CD8-positive, alpha-beta T cell (primary cell): ENCODE measurements at regions of chr12 and their contacts with region 1.

Region 1: GRCh38 chr12:11648831-11649702 is at the start of gene ETV6:
- DNase-seq: peak; percentile 22 to 88 (median 64)
- ATAC-seq: peak; percentile 50
- H3K4me3 ChIP-seq: peak within 1 kb of the TSS; percentile 92 to 98
- H3K4me3 Mint-ChIP-seq: peak within 1 kb of the TSS; percentile 96
- H3K27ac ChIP-seq: peak within 1 kb of the TSS; percentile 75 to 76
- H3K27ac Mint-ChIP-seq: peak within 1 kb of the TSS; percentile 94
- H3K4me1 ChIP-seq: peaks cover 31% of the 10 kb centered on the region
- H3K4me1 Mint-ChIP-seq: peaks cover 38% of the 10 kb centered on the region
- H3K27me3 ChIP-seq: no peaks in the 10 kb centered on the region
- H3K27me3 Mint-ChIP-seq: no peaks in the 10 kb centered on the region
- CTCF ChIP-seq: no peak
- total RNA-seq, gene ETV6: 11.3 to 13.9 TPM

Region 2: GRCh38 chr12:9883175-9883574 is 1765.9 kb before region 1 on chr12:
- CTCF ChIA-PET with region 1: no interaction called
- POLR2A ChIA-PET with region 1: no interaction called
- intact Hi-C with region 1: no loop called
- DNase-seq: no peak
- ATAC-seq: no peak
- H3K4me3 ChIP-seq: no peak overlapping the region
- H3K4me3 Mint-ChIP-seq: no peak overlapping the region
- H3K27ac ChIP-seq: no peak overlapping the region
- H3K27ac Mint-ChIP-seq: no peak overlapping the region
- H3K4me1 ChIP-seq: no peaks in the 10 kb centered on the region
- H3K4me1 Mint-ChIP-seq: peaks cover 11% of the 10 kb centered on the region
- H3K27me3 ChIP-seq: no peaks in the 10 kb centered on the region
- H3K27me3 Mint-ChIP-seq: no peaks in the 10 kb centered on the region
- CTCF ChIP-seq: no peak

Region 3: GRCh38 chr12:10726940-10727339 is 922.1 kb before region 1 on chr12:
- CTCF ChIA-PET with region 1: no interaction called
- POLR2A ChIA-PET with region 1: no interaction called
- intact Hi-C with region 1: loop called in 1 of 2 experiments (anchors 5 kb)
- DNase-seq: no peak
- ATAC-seq: no peak
- H3K4me3 ChIP-seq: no peak overlapping the region
- H3K4me3 Mint-ChIP-seq: no peak overlapping the region
- H3K27ac ChIP-seq: no peak overlapping the region
- H3K27ac Mint-ChIP-seq: no peak overlapping the region
- H3K4me1 ChIP-seq: peaks cover 8% of the 10 kb centered on the region
- H3K4me1 Mint-ChIP-seq: peaks cover 15% of the 10 kb centered on the region
- H3K27me3 ChIP-seq: peaks cover 0 to 8% of the 10 kb centered on the region in 2 experiments
- H3K27me3 Mint-ChIP-seq: peaks cover 31% of the 10 kb centered on the region
- CTCF ChIP-seq: no peak

Region 4: DNA sequence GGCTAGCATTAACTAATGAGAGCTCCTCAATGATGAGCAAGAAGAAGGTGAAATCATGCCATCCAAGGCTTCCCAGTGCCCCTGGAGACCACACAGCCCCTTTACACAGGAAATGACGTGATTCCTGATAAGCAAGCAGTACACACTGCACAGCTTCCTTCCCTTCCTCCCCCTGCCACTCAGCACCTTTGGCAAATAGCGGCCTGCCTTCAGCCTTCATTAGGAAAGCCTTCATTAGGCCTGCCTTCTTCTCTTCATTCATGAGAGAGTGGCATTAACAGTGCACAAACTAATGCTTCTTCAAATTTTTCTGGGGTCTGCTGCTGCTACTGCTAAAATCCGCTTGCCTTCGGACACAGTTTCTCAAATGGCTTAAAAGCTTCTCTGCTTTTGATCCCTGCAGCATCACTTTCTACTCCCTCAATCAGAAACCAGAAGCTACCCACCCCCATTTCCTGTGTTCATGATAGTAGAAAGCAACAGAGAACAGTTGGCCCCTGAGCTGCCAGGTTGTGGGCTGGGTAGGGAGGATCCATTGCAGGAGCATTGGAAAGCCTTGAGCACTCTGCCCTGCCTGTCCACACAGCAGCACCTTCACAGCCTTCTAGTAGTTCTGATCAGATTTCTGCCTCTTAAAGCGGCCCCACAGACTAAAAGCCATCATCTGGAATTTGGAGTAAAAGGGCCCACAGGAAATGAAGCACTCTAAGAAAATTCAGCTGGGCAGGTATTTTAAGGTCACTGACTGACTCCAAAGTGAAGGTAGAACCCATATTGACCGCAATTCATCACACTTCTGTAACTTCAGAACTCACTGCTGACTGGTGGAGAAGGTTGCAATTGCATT is 103.4 kb before region 1 on chr12:
- CTCF ChIA-PET with region 1: no interaction called
- POLR2A ChIA-PET with region 1: no interaction called
- intact Hi-C with region 1: loop called in 1 of 2 experiments (anchors 5 kb)
- DNase-seq: peak; percentile 13 to 85 (median 50)
- ATAC-seq: peak; percentile 80
- H3K4me3 ChIP-seq: peak overlapping the region; percentile 2 to 9
- H3K4me3 Mint-ChIP-seq: peak overlapping the region; percentile 64
- H3K27ac ChIP-seq: peak overlapping the region; percentile 74 to 76
- H3K27ac Mint-ChIP-seq: peak overlapping the region; percentile 95
- H3K4me1 ChIP-seq: peaks cover 39% of the 10 kb centered on the region
- H3K4me1 Mint-ChIP-seq: peaks cover 57% of the 10 kb centered on the region
- H3K27me3 ChIP-seq: no peaks in the 10 kb centered on the region
- H3K27me3 Mint-ChIP-seq: no peaks in the 10 kb centered on the region
- CTCF ChIP-seq: peak; percentile 35

Region 5: GRCh38 chr12:11730299-11731041 is 81.4 kb after region 1 on chr12:
- CTCF ChIA-PET with region 1: no interaction called
- POLR2A ChIA-PET with region 1: no interaction called
- intact Hi-C with region 1: loop called (anchors 5 kb)
- DNase-seq: no peak
- ATAC-seq: no peak
- H3K4me3 ChIP-seq: no peak overlapping the region
- H3K4me3 Mint-ChIP-seq: peak overlapping the region; percentile 52
- H3K27ac ChIP-seq: peak overlapping the region in 1 of 2 experiments; percentile 8
- H3K27ac Mint-ChIP-seq: peak overlapping the region; percentile 83
- H3K4me1 ChIP-seq: peaks cover 43% of the 10 kb centered on the region
- H3K4me1 Mint-ChIP-seq: peaks cover 69% of the 10 kb centered on the region
- H3K27me3 ChIP-seq: no peaks in the 10 kb centered on the region
- H3K27me3 Mint-ChIP-seq: no peaks in the 10 kb centered on the region
- CTCF ChIP-seq: no peak

Region 6: GRCh38 chr12:11981121-11981733 is 332.2 kb after region 1 on chr12:
- CTCF ChIA-PET with region 1: no interaction called
- POLR2A ChIA-PET with region 1: no interaction called
- intact Hi-C with region 1: loop called in 1 of 2 experiments (anchors 5 kb)
- DNase-seq: peak in 8 of 9 experiments; percentile 9 to 92 (median 36)
- ATAC-seq: peak; percentile 86
- H3K4me3 ChIP-seq: peak overlapping the region in 1 of 2 experiments; percentile 13
- H3K4me3 Mint-ChIP-seq: peak overlapping the region; percentile 0
- H3K27ac ChIP-seq: peak overlapping the region in 1 of 2 experiments; percentile 69
- H3K27ac Mint-ChIP-seq: peak overlapping the region; percentile 86
- H3K4me1 ChIP-seq: peaks cover 24% of the 10 kb centered on the region
- H3K4me1 Mint-ChIP-seq: peaks cover 30% of the 10 kb centered on the region
- H3K27me3 ChIP-seq: no peaks in the 10 kb centered on the region
- H3K27me3 Mint-ChIP-seq: no peaks in the 10 kb centered on the region
- CTCF ChIP-seq: no peak

Region 7: DNA sequence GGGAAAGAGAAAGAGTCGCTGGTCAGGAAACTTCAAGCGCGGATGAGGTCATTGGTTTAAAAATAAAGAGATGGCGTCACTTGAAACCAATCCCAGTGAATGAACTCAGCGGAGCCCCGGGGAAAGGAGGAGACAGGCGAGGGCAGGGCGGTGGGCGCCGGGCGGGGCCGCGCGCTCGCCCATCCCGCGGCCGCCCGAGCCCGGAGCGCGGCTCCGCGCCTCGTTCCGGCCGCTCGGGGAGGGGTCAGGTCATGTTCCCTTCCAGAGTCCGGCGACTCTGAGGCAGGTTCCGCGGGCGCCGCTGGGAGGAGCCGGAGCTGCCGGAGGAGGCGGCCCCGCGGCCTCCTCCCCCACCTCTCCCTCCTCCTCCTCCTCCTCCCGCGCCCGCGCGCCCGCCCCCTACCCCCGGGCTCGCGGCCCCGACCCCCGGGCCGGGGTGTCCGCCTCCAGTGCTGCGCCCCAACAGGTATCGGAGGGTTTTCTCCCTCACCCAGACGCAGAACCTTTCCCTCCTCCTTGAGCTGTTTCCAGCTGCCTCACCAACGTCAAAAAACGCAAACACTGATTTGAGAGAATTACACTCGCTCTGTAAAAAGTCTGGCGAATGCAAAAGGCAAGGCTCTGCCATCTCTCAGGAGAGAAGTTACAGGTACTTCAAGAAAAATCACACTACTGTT is 913.7 kb after region 1 on chr12 and contains the start of gene DUSP16:
- CTCF ChIA-PET with region 1: no interaction called
- POLR2A ChIA-PET with region 1: no interaction called
- intact Hi-C with region 1: loop called in 1 of 2 experiments (anchors 2 kb)
- DNase-seq: peak; percentile 50 to 95 (median 75)
- ATAC-seq: peak; percentile 65
- H3K4me3 ChIP-seq: peak within 1 kb of the TSS; percentile 77 to 80
- H3K4me3 Mint-ChIP-seq: peak within 1 kb of the TSS; percentile 95
- H3K27ac ChIP-seq: peak within 1 kb of the TSS; percentile 92 to 96
- H3K27ac Mint-ChIP-seq: peak within 1 kb of the TSS; percentile 99
- H3K4me1 ChIP-seq: peaks cover 16% of the 10 kb centered on the region
- H3K4me1 Mint-ChIP-seq: peaks cover 43% of the 10 kb centered on the region
- H3K27me3 ChIP-seq: no peaks in the 10 kb centered on the region
- H3K27me3 Mint-ChIP-seq: no peaks in the 10 kb centered on the region
- CTCF ChIP-seq: no peak
- total RNA-seq, gene DUSP16: 27.9 to 34.1 TPM